ENCODE measurements at regions of chr20 and their contacts with region 1.

Region 1: GRCh38 chr20:48295445-48295963 is 510.2 kb upstream of the SULF2 start:
- DNase-seq: no peak
- H3K4me3 ChIP-seq: no peak overlapping the region
- H3K27ac ChIP-seq: peak overlapping the region; percentile 45 to 75
- H3K4me1 ChIP-seq: peaks cover 4 to 22% of the 10 kb centered on the region in 2 donors
- H3K27me3 ChIP-seq: no peaks in the 10 kb centered on the region
- CTCF ChIP-seq: peak in 2 of 3 experiments; percentile 24 to 28

Region 2: GRCh38 chr20:47725248-47725973 is 570.1 kb before region 1 on chr20:
- intact Hi-C with region 1: loop called (anchors 5 kb)
- DNase-seq: peak in 1 of 2 donors; percentile 82
- H3K4me3 ChIP-seq: no peak overlapping the region
- H3K27ac ChIP-seq: no peak overlapping the region
- H3K4me1 ChIP-seq: peaks cover 0 to 8% of the 10 kb centered on the region in 2 donors
- H3K27me3 ChIP-seq: no peaks in the 10 kb centered on the region
- CTCF ChIP-seq: peak; percentile 67 to 88 (median 84)

Region 3: DNA sequence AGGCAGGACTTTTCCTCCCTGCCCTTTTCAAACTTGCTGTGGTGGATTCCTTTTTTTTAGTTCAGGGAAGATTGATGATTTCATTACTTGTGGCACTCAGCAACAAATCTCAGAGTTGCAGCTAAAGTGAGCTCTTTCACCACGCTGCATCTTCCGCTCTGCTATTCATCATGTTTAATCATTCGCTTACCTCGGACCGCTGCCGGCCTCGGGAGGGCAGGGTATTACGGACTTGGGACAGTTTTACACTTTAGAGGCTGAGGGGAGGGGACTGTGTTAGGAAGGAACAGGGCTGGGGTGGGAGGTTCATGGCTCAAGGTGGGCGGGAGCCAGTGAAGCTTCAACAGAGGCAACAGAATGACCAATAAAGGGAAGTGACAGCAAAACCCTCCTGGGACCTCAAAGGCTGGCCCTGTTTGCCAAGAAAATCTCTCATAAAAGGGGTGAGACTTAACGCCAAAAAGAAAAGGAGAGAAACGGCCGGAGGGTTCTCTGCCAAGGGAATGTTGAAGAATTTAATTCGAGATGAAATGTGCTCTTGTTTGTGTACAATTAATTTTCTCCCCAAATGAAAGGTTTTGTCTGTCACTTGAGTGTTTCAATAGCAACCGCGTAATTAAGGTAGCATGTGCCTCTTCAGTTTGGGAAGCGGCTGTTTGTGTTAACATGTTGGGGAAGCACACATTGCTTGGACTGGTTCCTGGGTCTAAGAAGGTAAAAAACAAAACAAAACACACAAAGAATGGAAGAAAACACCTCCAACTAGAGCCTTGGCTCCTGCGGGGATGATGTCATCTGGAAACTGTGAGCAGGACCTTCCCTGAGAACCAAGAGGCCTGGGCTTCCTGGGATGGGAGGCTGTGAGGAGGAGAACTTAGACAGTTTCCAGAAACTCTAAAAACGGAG is 437.7 kb before region 1 on chr20:
- intact Hi-C with region 1: loop called (anchors 5 kb)
- DNase-seq: peak in 1 of 2 donors; percentile 83
- H3K4me3 ChIP-seq: peak overlapping the region; percentile 11 to 41
- H3K27ac ChIP-seq: peak overlapping the region; percentile 70 to 78
- H3K4me1 ChIP-seq: peaks cover 4 to 8% of the 10 kb centered on the region in 2 donors
- H3K27me3 ChIP-seq: no peaks in the 10 kb centered on the region
- CTCF ChIP-seq: peak in 1 of 3 experiments; percentile 17

Region 4: DNA sequence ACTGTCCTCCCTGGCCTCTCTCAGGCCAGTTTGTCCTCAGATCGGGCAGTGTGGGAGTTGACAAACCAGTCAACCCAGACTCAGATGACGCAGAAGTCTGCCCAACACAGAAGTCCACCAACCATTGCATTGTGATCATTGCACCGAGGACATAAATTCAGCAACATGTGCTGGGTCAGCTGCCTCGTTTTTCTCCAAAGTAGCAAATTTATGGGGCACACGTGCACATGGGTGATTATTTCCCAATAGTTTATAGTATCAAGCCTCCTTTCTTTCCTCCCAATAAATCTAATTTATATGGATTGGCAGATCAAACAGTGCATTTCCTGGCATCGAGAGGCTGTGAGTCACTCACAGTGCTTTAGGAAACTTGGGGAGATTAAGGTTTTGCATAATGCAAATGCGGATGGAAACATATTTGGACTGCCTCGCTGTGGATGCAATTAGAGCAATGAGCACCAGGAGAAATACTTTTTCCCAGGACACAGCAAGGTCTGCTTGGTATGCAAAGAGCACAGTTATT is 96.5 kb before region 1 on chr20:
- intact Hi-C with region 1: no loop called
- DNase-seq: no peak
- H3K4me3 ChIP-seq: no peak overlapping the region
- H3K27ac ChIP-seq: no peak overlapping the region
- H3K4me1 ChIP-seq: no peaks in the 10 kb centered on the region
- H3K27me3 ChIP-seq: no peaks in the 10 kb centered on the region
- CTCF ChIP-seq: no peak

Region 5: GRCh38 chr20:48921151-48921898 is 625.8 kb after region 1 on chr20 and contains the start of gene ARFGEF2:
- intact Hi-C with region 1: loop called (anchors 10 kb)
- DNase-seq: peak; percentile 73 to 95
- H3K4me3 ChIP-seq: peak within 1 kb of the TSS; percentile 91 to 99
- H3K27ac ChIP-seq: peak within 1 kb of the TSS; percentile 89 to 96
- H3K4me1 ChIP-seq: peaks cover 12 to 28% of the 10 kb centered on the region in 2 donors
- H3K27me3 ChIP-seq: no peaks in the 10 kb centered on the region
- CTCF ChIP-seq: peak in 2 of 3 experiments; percentile 13 to 36
- total RNA-seq, gene ARFGEF2: 7.9 TPM